Activated CD8-positive, alpha-beta T cell treated with anti-CD3 and anti-CD28 coated beads for 36 hours (primary cell): ENCODE measurements at regions of chr17 and their contacts with region 1.

Region 1: DNA sequence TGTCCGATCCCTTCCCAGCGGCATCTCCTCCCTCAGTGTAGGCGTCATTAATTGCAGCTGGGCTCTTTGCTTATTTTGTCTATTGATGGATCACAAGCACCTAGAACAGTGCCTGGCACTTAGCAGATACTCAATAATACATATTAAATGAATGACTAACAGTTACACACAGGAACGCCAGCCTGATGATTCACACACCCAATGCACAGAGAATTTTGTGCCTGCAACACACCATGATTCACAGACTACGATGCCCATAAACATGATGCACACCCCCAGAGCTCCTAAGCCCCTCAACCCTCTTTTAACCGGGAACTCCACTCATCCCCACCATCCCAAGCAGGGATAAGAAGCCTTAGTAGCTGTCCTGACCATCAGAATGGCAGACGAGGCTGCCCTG is 66.6 kb upstream of the TMEM97 start:
- DNase-seq: no peak
- ATAC-seq: no peak
- H3K4me3 Mint-ChIP-seq: no peak overlapping the region
- H3K27ac Mint-ChIP-seq: no peak overlapping the region
- H3K4me1 Mint-ChIP-seq: peaks cover 3% of the 10 kb centered on the region
- H3K27me3 Mint-ChIP-seq: peaks cover 22% of the 10 kb centered on the region
- CTCF ChIP-seq: no peak

Region 2: DNA sequence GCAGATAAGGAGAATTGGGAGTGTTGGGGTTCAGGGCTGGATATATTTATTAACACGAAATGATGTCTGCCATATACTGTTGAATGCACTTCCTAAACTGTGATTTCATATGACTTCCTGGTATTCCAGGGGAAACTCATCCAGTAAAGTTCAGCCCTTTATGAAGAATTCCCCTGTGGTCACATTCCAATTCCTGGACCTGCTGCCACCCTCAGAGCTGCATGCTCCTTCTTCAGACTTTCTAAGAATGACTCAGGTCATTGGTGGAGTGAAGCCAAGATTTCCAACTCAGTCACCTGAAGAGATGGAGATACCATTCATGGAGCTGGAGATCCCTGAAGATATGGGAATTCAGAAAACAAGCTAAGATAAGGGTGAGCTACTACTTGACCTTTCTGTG is 47.7 kb before region 1 on chr17:
- CTCF ChIA-PET with region 1: no interaction called
- POLR2A ChIA-PET with region 1: no interaction called
- intact Hi-C with region 1: no loop called
- DNase-seq: no peak
- ATAC-seq: no peak
- H3K4me3 Mint-ChIP-seq: no peak overlapping the region
- H3K27ac Mint-ChIP-seq: no peak overlapping the region
- H3K4me1 Mint-ChIP-seq: no peaks in the 10 kb centered on the region
- H3K27me3 Mint-ChIP-seq: peaks cover 5% of the 10 kb centered on the region
- CTCF ChIP-seq: no peak

Region 3: GRCh38 chr17:28240991-28241340 is 11.5 kb before region 1 on chr17:
- CTCF ChIA-PET with region 1: interaction called, 13 read pairs
- POLR2A ChIA-PET with region 1: no interaction called
- intact Hi-C with region 1: no loop called
- DNase-seq: no peak
- ATAC-seq: no peak
- H3K4me3 Mint-ChIP-seq: no peak overlapping the region
- H3K27ac Mint-ChIP-seq: no peak overlapping the region
- H3K4me1 Mint-ChIP-seq: no peaks in the 10 kb centered on the region
- H3K27me3 Mint-ChIP-seq: peaks cover 1% of the 10 kb centered on the region
- CTCF ChIP-seq: no peak

Region 4: DNA sequence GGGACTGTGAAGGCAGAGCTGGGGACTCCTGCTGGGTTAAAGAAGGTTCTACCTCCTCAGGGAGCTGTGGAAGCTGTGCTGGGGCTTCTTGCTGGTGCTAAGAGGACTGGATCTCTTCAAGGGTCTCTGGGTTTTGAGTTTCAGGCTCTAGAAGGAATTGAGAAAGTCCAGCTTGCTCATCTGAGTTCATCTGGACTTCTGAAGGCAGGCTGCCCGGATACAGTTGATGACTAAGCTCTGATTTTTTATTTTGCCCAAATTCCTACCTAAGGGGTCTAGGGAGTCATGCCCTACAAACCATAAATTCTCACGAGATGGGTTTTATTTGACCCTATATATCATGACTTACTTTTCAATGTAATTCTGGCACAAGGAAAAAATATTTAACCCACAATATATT is 19.7 kb after region 1 on chr17:
- CTCF ChIA-PET with region 1: interaction called, 18 read pairs
- POLR2A ChIA-PET with region 1: no interaction called
- intact Hi-C with region 1: no loop called
- DNase-seq: no peak
- ATAC-seq: no peak
- H3K4me3 Mint-ChIP-seq: no peak overlapping the region
- H3K27ac Mint-ChIP-seq: no peak overlapping the region
- H3K4me1 Mint-ChIP-seq: peaks cover 3% of the 10 kb centered on the region
- H3K27me3 Mint-ChIP-seq: peaks cover 43% of the 10 kb centered on the region
- CTCF ChIP-seq: no peak